KBM-7 (cell line): ENCODE measurements at regions of chr4 and their contacts with region 1.

Region 1: GRCh38 chr4:39124885-39125599 is 57.3 kb upstream of the WDR19 start:
- DNase-seq: no peak

Region 2: DNA sequence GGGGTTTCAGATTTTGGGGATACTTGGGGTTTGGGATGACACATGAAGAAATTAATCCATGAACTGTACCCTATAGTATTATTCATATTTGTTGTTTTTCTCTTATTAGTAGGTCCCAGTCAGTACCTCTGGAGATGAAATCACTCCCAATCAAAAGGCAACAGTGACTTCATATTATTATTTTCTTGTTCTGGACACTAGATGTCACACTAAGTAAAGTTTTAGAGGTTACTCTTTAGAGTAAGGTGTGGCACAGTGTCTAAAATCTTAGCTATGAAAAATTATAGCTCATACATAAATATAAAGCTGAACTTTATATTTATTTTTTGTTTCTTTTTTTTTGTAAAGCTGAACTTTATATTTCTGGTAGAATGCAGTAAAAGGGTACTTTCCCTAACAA is 222.3 kb before region 1 on chr4:
- in situ Hi-C with region 1: loop called (anchors 25 kb)
- DNase-seq: peak; percentile 55

Region 3: GRCh38 chr4:39394702-39395101 is 269.7 kb after region 1 on chr4:
- in situ Hi-C with region 1: no loop called
- DNase-seq: no peak